ENCODE measurements at regions of chr6 and their contacts with region 1.

Region 1: GRCh38 chr6:31366693-31367470 is 9.9 kb upstream of the HLA-B start:
- DNase-seq: peak; percentile 82 to 90
- ATAC-seq: peak; percentile 98 to 100 (median 100)
- H3K4me3 ChIP-seq: peak overlapping the region in 8 of 10 donors; percentile 12 to 51 (median 42)
- H3K27ac ChIP-seq: no peak overlapping the region
- H3K4me1 ChIP-seq: peaks cover 0 to 9% (median 0%) of the 10 kb centered on the region in 9 donors
- H3K27me3 ChIP-seq: peaks cover 0 to 34% (median 14%) of the 10 kb centered on the region in 7 donors
- CTCF ChIP-seq: peak; percentile 88 to 97 (median 94)

Region 2: DNA sequence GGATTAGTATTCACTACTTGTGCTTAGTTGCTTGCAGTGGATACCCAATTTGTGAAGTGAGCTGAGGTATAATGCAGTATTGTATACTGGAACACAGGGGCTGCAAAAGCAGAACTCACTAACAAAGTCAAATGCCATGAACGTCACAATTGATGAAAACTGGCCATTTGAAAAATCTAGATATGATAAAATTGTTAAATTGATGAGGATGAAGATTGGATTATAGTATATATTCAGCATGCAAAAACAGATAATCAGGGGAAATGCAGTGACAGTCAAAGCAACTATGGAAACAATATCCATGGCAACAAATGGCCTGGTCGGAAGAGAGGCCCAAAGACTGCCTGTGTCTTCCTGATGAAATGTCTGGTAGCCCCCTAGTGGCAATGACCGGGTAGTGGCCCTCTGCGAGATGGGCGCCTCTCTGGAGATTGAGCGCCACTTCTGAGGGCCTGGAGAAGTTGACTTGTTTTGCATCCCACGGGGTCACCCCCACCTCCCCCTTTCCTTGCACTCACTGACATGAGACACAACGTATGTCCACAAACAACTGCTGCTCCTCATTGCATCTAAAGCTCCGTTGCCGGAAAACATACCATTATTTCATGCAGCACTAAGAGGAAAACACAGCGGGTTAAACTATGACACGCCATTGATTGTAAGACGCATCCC is 298.1 kb before region 1 on chr6:
- intact Hi-C with region 1: no loop called
- DNase-seq: peak; percentile 74 to 81
- ATAC-seq: peak; percentile 77 to 93 (median 84)
- H3K4me3 ChIP-seq: no peak overlapping the region
- H3K27ac ChIP-seq: no peak overlapping the region
- H3K4me1 ChIP-seq: peaks cover 0 to 13% (median 0%) of the 10 kb centered on the region in 9 donors
- H3K27me3 ChIP-seq: no peaks in the 10 kb centered on the region
- CTCF ChIP-seq: peak; percentile 67 to 91 (median 86)

Region 3: GRCh38 chr6:31087494-31088089 is 279.3 kb before region 1 on chr6:
- intact Hi-C with region 1: no loop called
- DNase-seq: peak; percentile 83 to 85
- ATAC-seq: peak; percentile 84 to 97 (median 94)
- H3K4me3 ChIP-seq: no peak overlapping the region
- H3K27ac ChIP-seq: peak overlapping the region in 1 of 10 donors; percentile 2
- H3K4me1 ChIP-seq: peaks cover 0 to 19% (median 8%) of the 10 kb centered on the region in 9 donors
- H3K27me3 ChIP-seq: no peaks in the 10 kb centered on the region
- CTCF ChIP-seq: peak; percentile 73 to 87 (median 81)

Region 4: GRCh38 chr6:31131595-31131994 is 235.3 kb before region 1 on chr6:
- intact Hi-C with region 1: loop called in 8 of 10 experiments (anchors 2 to 5 kb)
- DNase-seq: no peak
- ATAC-seq: no peak
- H3K4me3 ChIP-seq: no peak overlapping the region
- H3K27ac ChIP-seq: no peak overlapping the region
- H3K4me1 ChIP-seq: peaks cover 5 to 15% (median 10%) of the 10 kb centered on the region in 9 donors
- H3K27me3 ChIP-seq: no peaks in the 10 kb centered on the region
- CTCF ChIP-seq: no peak

Region 5: GRCh38 chr6:31351401-31352309 is 15.2 kb before region 1 on chr6:
- intact Hi-C with region 1: no loop called
- DNase-seq: no peak
- ATAC-seq: no peak
- H3K4me3 ChIP-seq: no peak overlapping the region
- H3K27ac ChIP-seq: no peak overlapping the region
- H3K4me1 ChIP-seq: peaks cover 0 to 33% (median 16%) of the 10 kb centered on the region in 9 donors
- H3K27me3 ChIP-seq: no peaks in the 10 kb centered on the region
- CTCF ChIP-seq: no peak

Region 6: GRCh38 chr6:31689249-31690110 is 322.6 kb after region 1 on chr6:
- intact Hi-C with region 1: no loop called
- DNase-seq: no peak
- ATAC-seq: no peak
- H3K4me3 ChIP-seq: no peak overlapping the region
- H3K27ac ChIP-seq: no peak overlapping the region
- H3K4me1 ChIP-seq: peaks cover 0 to 4% (median 0%) of the 10 kb centered on the region in 9 donors
- H3K27me3 ChIP-seq: no peaks in the 10 kb centered on the region
- CTCF ChIP-seq: peak in 5 of 9 donors; percentile 12 to 43 (median 22)